ENCODE measurements at regions of chr20 and their contacts with region 1.

Region 1: GRCh38 chr20:62793912-62794724 is 2.2 kb upstream of the MRGBP start:
- DNase-seq: peak; percentile 97 to 99
- ATAC-seq: peak; percentile 91 to 95 (median 92)
- H3K4me3 ChIP-seq: peak overlapping the region; percentile 14 to 97 (median 69)
- H3K27ac ChIP-seq: peak overlapping the region; percentile 70 to 96 (median 92)
- H3K4me1 ChIP-seq: peaks cover 6 to 50% (median 38%) of the 10 kb centered on the region in 9 donors
- H3K27me3 ChIP-seq: no peaks in the 10 kb centered on the region
- CTCF ChIP-seq: no peak

Region 2: GRCh38 chr20:62616728-62617621 is 177.1 kb before region 1 on chr20:
- intact Hi-C with region 1: loop called in 2 of 10 experiments (anchors 2 to 5 kb)
- DNase-seq: peak; percentile 66 to 81
- ATAC-seq: peak; percentile 73 to 94 (median 84)
- H3K4me3 ChIP-seq: no peak overlapping the region
- H3K27ac ChIP-seq: peak overlapping the region; percentile 57 to 94 (median 84)
- H3K4me1 ChIP-seq: peaks cover 19 to 34% (median 28%) of the 10 kb centered on the region in 9 donors
- H3K27me3 ChIP-seq: peaks cover 0 to 16% (median 0%) of the 10 kb centered on the region in 7 donors
- CTCF ChIP-seq: peak; percentile 93 to 98 (median 96)